Adrenal gland (tissue), 19 donors: ENCODE measurements at regions of chr4 and their contacts with region 1.

Region 1: GRCh38 chr4:105471566-105472176 is 2.2 kb downstream of the PPA2 start:
- DNase-seq: peak; percentile 73 to 89 (median 79)
- H3K4me3 ChIP-seq: peak overlapping the region in 1 of 4 donors; percentile 84
- H3K27ac ChIP-seq: peak overlapping the region in 3 of 5 donors; percentile 98 to 100 (median 99)
- H3K4me1 ChIP-seq: peaks cover 16 to 37% of the 10 kb centered on the region in 2 donors
- H3K27me3 ChIP-seq: no peaks in the 10 kb centered on the region
- CTCF ChIP-seq: peak; percentile 50 to 86 (median 77)
- POLR2A ChIP-seq: no peak

Region 2: GRCh38 chr4:105135785-105136184 is 335.9 kb before region 1 on chr4:
- intact Hi-C with region 1: loop called (anchors 5 kb)
- DNase-seq: no peak
- H3K4me3 ChIP-seq: no peak overlapping the region
- H3K27ac ChIP-seq: no peak overlapping the region
- H3K4me1 ChIP-seq: no peaks in the 10 kb centered on the region
- H3K27me3 ChIP-seq: no peaks in the 10 kb centered on the region
- CTCF ChIP-seq: no peak
- POLR2A ChIP-seq: no peak

Region 3: GRCh38 chr4:105140684-105141490 is 330.8 kb before region 1 on chr4:
- intact Hi-C with region 1: loop called (anchors 5 kb)
- DNase-seq: peak in 5 of 7 donors; percentile 25 to 47 (median 33)
- H3K4me3 ChIP-seq: no peak overlapping the region
- H3K27ac ChIP-seq: no peak overlapping the region
- H3K4me1 ChIP-seq: no peaks in the 10 kb centered on the region
- H3K27me3 ChIP-seq: no peaks in the 10 kb centered on the region
- CTCF ChIP-seq: peak; percentile 46 to 74 (median 68)
- POLR2A ChIP-seq: no peak

Region 4: DNA sequence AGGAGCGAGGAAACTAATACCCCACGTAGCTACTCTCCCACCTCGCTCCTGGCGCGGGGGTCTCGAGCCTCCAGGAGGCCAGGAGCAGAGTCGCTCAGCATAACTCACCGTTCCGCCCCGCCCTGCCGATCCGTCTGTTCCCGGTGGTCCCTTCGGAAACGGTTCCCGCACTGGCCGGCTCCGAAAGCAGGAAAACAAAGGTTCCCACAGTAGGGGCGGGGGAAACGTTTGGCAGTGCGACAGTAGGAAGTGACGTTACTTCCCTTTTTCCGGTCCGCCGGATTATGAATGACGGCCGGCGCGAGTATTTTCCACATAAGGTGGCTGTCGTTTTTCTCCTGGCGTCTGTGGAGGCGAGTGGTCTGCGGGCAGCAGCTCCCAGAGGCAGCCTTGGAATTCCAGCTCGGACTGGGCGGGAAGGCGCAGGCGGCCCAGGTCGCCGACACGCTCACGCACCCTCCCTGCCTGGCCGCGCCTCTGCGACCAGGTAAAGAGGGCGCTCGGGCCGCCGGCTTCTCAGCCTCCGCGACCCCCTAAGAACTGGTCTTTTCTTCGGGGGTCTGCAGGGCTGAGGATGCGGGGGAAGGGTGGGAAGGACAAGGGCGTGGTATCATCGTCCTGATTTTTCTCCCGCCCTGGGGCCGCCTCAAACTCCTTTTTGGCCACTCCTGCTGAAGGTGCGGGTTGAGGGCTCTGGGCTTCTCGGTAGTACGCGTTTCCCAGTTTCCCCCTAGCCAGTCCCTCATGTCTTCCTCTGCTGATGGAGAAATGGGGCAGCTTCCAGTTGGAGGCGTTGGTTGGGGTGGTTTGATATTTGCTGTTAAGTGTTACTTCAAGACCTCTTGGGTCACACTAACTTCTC is 237.1 kb after region 1 on chr4 and contains the starts of genes GSTCD and INTS12:
- intact Hi-C with region 1: no loop called
- DNase-seq: peak; percentile 91 to 97 (median 95)
- H3K4me3 ChIP-seq: peak within 1 kb of the TSS; percentile 48 to 97 (median 92)
- H3K27ac ChIP-seq: peak within 1 kb of the TSS; percentile 57 to 93 (median 82)
- H3K4me1 ChIP-seq: peaks cover 7 to 22% of the 10 kb centered on the region in 2 donors
- H3K27me3 ChIP-seq: no peaks in the 10 kb centered on the region
- CTCF ChIP-seq: peak in 1 of 6 experiments; percentile 38
- POLR2A ChIP-seq: peak; percentile 65 to 85
- total RNA-seq, gene GSTCD: 5.3 to 13.8 (median 7.9) TPM
- total RNA-seq, gene INTS12: 4.3 to 27.0 (median 16.7) TPM